ENCODE measurements at regions of chr1 and their contacts with region 1.

Region 1: GRCh38 chr1:19344372-19345230 is 32.5 kb downstream of the SLC66A1 start:
- H3K4me3 Mint-ChIP-seq: no peak overlapping the region
- H3K27ac Mint-ChIP-seq: peak overlapping the region; percentile 69
- H3K4me1 Mint-ChIP-seq: peaks cover 62% of the 10 kb centered on the region
- H3K27me3 Mint-ChIP-seq: no peaks in the 10 kb centered on the region

Region 2: DNA sequence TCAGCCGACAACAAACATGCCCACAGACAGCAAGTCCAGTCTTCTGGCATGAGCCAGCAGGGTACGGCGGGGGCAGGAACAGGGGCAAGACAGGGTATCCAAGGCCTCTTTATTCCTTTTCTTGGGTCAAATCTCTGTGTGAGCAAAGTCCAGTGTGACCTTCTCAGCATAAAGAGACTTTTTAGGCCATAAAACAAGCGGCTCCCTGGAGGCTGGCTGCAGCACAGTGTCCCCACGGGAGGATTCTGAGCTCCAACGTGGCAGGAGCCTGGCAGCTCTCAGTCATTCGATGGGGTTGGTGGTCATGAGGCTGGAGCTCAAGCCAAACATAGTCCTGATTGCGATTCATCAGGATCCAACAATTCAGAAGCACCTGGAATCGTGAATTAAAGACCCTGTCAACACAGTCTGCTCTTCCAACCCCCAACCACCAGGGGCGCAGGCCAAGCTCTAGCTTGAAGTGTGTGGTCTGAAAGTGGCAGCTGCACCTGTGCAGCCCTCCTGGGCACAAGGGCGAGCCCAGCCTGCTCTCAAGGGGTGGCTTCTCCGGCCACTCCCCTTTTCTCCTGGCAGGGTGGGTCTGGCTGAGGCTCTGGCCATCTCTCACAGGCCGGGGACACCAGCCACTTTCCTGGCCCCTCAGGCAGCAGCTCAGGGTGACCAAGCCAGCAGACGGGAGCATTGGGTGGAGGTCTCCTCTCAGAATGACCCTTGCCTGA is 29.6 kb after region 1 on chr1:
- intact Hi-C with region 1: no loop called
- H3K4me3 Mint-ChIP-seq: no peak overlapping the region
- H3K27ac Mint-ChIP-seq: peak overlapping the region; percentile 55
- H3K4me1 Mint-ChIP-seq: peaks cover 54% of the 10 kb centered on the region
- H3K27me3 Mint-ChIP-seq: no peaks in the 10 kb centered on the region

Region 3: DNA sequence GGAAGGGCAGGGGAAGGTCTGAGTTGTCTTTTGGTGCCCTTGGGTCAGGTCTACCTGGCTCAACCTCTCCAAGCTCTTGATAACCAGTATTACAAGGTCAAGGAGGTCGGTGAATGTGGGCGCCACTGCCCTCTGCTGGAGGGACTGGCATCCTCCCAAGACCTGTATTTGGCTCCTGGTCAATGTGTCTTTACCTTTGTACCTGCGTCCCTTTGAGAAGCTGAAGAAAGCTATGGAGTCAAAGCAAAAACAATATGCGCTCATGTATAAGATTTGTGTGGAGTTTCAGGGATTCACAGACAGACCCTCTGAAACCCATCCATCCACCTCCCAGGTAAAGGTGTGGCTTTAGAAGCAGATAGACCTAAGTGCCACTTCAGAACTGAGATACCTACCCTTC is 237.7 kb after region 1 on chr1:
- intact Hi-C with region 1: loop called (anchors 5 kb)
- H3K4me3 Mint-ChIP-seq: no peak overlapping the region
- H3K27ac Mint-ChIP-seq: no peak overlapping the region
- H3K4me1 Mint-ChIP-seq: peaks cover 34% of the 10 kb centered on the region
- H3K27me3 Mint-ChIP-seq: peaks cover 4% of the 10 kb centered on the region

Region 4: GRCh38 chr1:19651141-19651737 is 306.6 kb after region 1 on chr1:
- intact Hi-C with region 1: loop called (anchors 2 kb)
- H3K4me3 Mint-ChIP-seq: no peak overlapping the region
- H3K27ac Mint-ChIP-seq: no peak overlapping the region
- H3K4me1 Mint-ChIP-seq: peaks cover 18% of the 10 kb centered on the region
- H3K27me3 Mint-ChIP-seq: peaks cover 50% of the 10 kb centered on the region

Measured in dendritic cell treated with granulocyte-macrophage colony-stimulating factor and Interleukin-4, amounts not matched to agents 40 ng/mL and 50 ng/mL, for 4 days (primary cell).